ENCODE measurements at regions of chr19 and their contacts with region 1.

Region 1: DNA sequence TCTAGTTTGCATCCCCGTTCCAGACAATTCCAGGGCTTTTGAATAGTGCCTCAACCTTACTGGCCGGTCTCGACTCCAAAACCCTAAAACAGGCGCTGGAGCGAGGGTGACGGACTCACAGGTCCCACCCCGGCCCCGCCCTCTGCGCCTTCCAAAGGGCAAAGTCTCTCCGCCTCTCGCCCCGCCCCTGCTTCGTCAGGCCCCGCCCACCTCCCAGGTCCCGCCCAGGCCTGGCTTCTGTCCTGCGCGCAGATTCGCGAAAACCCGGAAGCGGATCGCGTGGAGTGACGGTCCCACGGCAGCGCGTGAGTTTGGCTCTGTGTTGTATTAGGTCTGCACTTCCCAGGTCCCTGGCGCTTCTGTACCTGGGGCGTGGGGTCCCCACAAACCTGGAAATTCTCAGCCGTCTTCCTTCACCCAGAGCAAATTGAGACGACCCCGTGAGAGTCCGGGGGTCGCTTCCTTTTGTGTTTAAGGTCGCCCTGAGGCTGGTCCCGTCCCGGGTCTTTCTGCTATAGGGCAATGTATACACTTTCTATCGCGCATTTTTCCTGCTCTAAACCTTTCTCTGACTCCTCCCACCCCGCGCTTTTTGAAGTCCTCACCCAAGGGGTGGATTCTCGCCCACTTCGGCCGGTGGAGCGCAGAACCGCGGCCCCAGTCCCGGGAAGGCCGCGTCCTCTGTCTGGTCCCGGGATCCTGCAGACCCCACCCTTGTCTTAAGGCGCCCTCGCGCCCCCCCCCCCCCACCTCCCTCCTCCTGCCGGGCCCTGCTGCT is at the start of gene ZNF813:
- DNase-seq: peak; percentile 98
- ATAC-seq: peak; percentile 98
- H3K4me3 Mint-ChIP-seq: peak within 1 kb of the TSS; percentile 80
- H3K27ac Mint-ChIP-seq: peak within 1 kb of the TSS; percentile 87
- H3K4me1 Mint-ChIP-seq: peaks cover 20% of the 10 kb centered on the region
- H3K27me3 Mint-ChIP-seq: peaks cover 9% of the 10 kb centered on the region
- total RNA-seq, gene ZNF813: 5.8 to 7.4 TPM

Region 2: DNA sequence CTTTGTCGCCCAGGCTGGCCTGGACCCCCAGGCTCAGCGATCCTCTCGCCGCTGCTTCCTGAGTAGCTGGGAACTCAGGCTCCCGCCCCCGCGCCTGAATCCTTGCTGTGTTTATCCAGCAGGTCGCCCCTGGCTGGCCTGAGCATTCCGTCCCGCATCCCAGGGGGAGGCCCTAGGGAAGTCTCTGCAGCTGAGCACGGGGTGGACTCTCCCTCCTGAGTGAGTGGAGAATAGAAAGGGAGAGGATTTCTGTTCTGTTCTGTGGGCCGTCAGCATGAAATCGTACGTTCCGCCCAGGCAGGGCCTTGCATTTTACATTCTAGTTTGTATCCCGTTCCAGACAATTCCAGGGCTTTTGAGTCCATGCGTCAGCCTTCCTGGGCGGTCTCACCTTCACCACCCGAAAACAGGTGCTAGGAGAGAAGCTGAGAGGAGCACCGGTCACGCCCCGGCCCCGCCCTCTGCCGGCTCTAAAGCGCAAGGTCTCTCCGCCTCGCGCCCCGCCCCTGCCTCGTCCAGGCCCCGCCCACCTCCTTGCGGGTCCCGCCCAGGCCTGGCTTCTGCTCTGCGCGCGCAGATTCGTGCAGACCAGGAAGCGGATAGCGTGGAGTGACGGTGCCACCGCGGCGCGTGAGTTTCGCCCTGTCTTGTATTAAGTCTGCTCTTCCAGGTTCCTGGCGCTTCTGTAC is 36.1 kb before region 1 on chr19 and contains the start of gene ZNF761:
- CTCF ChIA-PET with region 1: no interaction called
- POLR2A ChIA-PET with region 1: no interaction called
- intact Hi-C with region 1: loop called (anchors 1 to 2 kb)
- DNase-seq: peak; percentile 98
- ATAC-seq: peak; percentile 99
- H3K4me3 Mint-ChIP-seq: peak within 1 kb of the TSS; percentile 94
- H3K27ac Mint-ChIP-seq: peak within 1 kb of the TSS; percentile 83
- H3K4me1 Mint-ChIP-seq: peaks cover 26% of the 10 kb centered on the region
- H3K27me3 Mint-ChIP-seq: no peaks in the 10 kb centered on the region
- total RNA-seq, gene ZNF761: 10.5 to 11.4 TPM